ENCODE measurements at regions of chr10 and their contacts with region 1.

Region 1: DNA sequence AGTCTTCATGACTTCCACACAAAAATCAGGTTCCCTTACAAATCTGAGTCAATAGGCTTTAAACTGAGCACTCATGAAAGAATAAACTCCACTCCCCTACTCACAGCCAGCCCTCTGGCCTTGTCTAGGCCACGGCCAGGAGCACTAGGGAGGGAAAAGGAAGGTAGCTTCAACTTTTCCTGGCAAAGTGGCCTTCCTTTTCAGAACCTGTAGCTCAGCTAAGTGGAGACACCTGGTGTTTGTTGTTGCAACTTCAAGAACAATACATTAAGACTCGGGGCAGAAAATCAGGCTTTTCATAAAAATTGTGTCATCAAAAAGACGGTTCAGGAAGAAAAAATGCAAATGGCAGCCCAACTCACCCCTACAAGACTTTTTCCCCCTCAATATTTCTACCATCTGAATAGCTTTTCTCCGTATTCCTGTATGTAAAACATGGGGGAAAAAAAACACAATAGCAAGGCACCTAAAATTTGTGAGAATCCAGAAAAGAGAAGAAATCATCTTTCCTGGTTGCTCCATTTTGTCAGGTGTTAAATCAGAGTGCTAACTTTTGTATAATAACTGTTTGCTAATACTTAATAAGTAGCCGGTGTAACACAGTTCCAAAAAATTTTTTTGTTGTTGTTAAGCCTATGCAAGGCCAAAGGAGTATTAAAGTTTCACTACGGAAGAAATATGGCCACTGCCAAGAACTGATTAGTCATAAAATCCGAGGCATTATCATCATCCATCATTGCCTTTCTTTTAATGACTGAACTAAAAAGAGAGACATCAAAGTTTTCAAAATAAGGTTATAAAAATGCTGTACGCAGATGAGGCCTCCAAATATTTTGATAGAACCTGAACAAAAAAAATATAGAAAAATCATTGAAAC is 66.2 kb upstream of the ARID5B start:
- DNase-seq: peak; percentile 13 to 73
- ATAC-seq: peak in 1 of 2 experiments; percentile 67; a peak in 3 of 6 replicates
- H3K4me3 ChIP-seq: no peak overlapping the region
- H3K27ac ChIP-seq: peak overlapping the region; percentile 14 to 45; a peak in 4 of 6 replicates
- H3K4me1 ChIP-seq: peaks cover 29% of the 10 kb centered on the region
- CTCF ChIP-seq: peak; percentile 58
- EP300 ChIP-seq: no peak
- POLR2A ChIP-seq: no peak
- RAD21 ChIP-seq: peak; percentile 67 to 68

Region 2: DNA sequence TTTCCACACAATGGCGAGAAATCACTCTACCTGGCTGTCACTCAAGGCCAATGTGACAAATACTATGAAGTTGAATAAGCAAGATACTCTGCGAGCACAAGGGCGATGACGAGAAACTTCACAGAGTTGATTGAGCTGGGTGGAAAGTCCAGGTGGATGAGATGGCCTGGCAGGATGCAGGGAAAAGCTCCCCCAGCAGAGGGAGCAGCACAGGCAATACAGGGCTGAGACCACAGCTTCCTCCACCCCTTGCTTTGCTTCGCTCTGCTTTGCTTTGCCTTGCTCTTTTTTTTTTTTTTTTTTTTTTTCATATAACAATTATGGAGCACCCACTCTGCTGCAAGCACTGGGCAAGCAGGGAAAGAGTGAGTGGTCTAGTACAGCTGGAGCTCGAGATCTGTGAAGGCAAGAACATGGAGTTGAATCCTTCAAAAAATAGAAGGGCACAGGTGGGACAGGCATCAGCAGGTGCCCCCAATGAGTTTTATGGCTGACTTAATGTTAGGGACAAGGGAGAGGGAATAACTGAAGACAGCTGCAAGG is 84.3 kb before region 1 on chr10:
- CTCF ChIA-PET with region 1: interaction called, 32 read pairs
- POLR2A ChIA-PET with region 1: no interaction called
- DNase-seq: peak; percentile 22 to 59
- ATAC-seq: peak; percentile 80 to 98
- H3K4me3 ChIP-seq: no peak overlapping the region
- H3K27ac ChIP-seq: no peak overlapping the region
- H3K4me1 ChIP-seq: peaks cover 14% of the 10 kb centered on the region
- CTCF ChIP-seq: peak; percentile 60
- EP300 ChIP-seq: no peak
- POLR2A ChIP-seq: no peak
- RAD21 ChIP-seq: peak; percentile 48 to 64; a peak in 3 of 5 replicates

Region 3: DNA sequence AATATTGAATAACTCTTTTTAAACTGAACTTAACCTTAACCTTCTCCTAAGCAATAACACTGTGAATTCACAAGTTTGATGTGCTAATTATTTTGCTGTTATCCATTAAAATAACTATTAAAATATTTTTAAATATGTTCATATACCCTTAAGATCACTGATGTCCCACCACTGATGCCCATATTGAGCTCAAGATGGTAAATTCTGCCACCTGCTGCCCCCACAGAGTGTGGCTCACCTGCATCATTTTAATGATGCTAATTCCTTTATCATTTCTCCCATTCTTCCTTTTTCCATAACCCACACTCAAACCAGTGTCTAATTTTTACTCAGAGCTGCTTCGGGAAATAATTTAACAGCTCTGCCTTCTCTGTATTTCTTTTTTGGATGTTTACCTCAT is 16.1 kb before region 1 on chr10:
- CTCF ChIA-PET with region 1: interaction called, 10 read pairs
- POLR2A ChIA-PET with region 1: no interaction called
- DNase-seq: no peak
- ATAC-seq: no peak
- H3K4me3 ChIP-seq: no peak overlapping the region
- H3K27ac ChIP-seq: no peak overlapping the region
- H3K4me1 ChIP-seq: no peaks in the 10 kb centered on the region
- CTCF ChIP-seq: no peak
- EP300 ChIP-seq: no peak
- POLR2A ChIP-seq: no peak
- RAD21 ChIP-seq: no peak; a peak in 2 of 5 replicates

Region 4: GRCh38 chr10:61855771-61856170 is 20.5 kb after region 1 on chr10:
- CTCF ChIA-PET with region 1: no interaction called
- POLR2A ChIA-PET with region 1: no interaction called
- DNase-seq: no peak
- ATAC-seq: no peak
- H3K4me3 ChIP-seq: no peak overlapping the region
- H3K27ac ChIP-seq: no peak overlapping the region
- H3K4me1 ChIP-seq: no peaks in the 10 kb centered on the region
- CTCF ChIP-seq: no peak
- EP300 ChIP-seq: no peak
- POLR2A ChIP-seq: no peak
- RAD21 ChIP-seq: no peak

Region 5: GRCh38 chr10:61890430-61890829 is 55.1 kb after region 1 on chr10:
- CTCF ChIA-PET with region 1: no interaction called
- POLR2A ChIA-PET with region 1: no interaction called
- DNase-seq: no peak
- ATAC-seq: no peak
- H3K4me3 ChIP-seq: no peak overlapping the region
- H3K27ac ChIP-seq: no peak overlapping the region
- H3K4me1 ChIP-seq: no peaks in the 10 kb centered on the region
- CTCF ChIP-seq: no peak
- EP300 ChIP-seq: no peak
- POLR2A ChIP-seq: no peak
- RAD21 ChIP-seq: no peak

Measured in A549 (cell line).